ENCODE measurements at regions of chr10 and their contacts with region 1.

Region 1: DNA sequence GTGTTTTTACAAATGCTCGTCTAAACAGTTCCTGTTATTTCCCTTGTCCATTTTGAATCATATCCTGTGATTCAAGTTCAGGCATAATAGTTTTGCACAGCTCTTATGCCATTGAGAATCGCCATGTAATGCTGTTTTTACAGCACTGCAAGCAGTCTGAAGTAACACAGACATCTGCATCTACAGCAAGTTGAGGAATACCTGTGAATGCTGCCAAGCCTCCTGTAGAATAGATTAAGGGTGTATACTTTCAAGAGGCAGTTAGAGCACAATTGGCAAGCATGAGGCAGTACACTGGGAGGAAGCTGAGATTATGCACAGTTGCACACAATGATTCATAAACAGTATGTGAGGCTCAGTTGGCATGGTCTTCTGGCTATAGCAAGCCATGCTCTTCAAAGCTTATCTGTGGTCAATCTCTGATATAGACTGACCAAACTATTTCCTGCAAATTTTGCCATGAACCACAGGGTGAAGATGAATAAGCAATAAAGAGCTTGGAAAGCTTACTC is 121.9 kb upstream of the AKR1E2 start:
- DNase-seq: peak; percentile 88
- H3K4me3 Mint-ChIP-seq: peak overlapping the region; percentile 49
- H3K27ac Mint-ChIP-seq: peak overlapping the region; percentile 94
- H3K4me1 Mint-ChIP-seq: peaks cover 12% of the 10 kb centered on the region
- H3K27me3 Mint-ChIP-seq: no peaks in the 10 kb centered on the region
- CTCF ChIP-seq: no peak

Region 2: DNA sequence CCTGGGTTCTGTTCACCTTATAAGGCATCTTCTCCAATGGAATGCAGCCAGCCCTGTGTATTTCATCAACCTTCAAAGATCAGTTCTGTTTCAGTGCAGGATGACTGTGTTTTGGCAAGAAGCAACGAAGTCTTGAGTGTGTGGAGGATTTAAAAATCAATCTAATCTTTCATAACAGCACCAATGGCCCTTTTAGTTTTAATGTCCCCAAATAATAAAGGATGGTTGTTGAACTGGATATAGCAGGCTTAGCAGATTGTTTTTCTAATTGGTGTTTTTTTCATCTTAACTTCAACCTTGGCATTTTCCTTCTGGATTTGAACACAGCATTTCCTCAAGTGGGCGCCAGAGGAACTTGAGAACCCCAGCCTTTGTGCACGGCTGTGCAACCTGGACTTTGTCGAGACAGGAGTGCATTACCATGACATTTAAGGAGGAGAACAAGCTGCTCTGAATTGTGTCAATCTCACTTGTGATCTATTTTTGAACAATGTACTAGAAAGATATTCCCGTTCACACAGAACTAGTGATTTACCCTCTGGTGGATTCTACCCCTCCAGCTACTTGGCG is 191.3 kb before region 1 on chr10:
- CTCF ChIA-PET with region 1: no interaction called
- POLR2A ChIA-PET with region 1: no interaction called
- intact Hi-C with region 1: loop called (anchors 1 kb)
- DNase-seq: peak; percentile 78
- H3K4me3 Mint-ChIP-seq: no peak overlapping the region
- H3K27ac Mint-ChIP-seq: peak overlapping the region; percentile 76
- H3K4me1 Mint-ChIP-seq: peaks cover 9% of the 10 kb centered on the region
- H3K27me3 Mint-ChIP-seq: no peaks in the 10 kb centered on the region
- CTCF ChIP-seq: peak; percentile 52

Region 3: DNA sequence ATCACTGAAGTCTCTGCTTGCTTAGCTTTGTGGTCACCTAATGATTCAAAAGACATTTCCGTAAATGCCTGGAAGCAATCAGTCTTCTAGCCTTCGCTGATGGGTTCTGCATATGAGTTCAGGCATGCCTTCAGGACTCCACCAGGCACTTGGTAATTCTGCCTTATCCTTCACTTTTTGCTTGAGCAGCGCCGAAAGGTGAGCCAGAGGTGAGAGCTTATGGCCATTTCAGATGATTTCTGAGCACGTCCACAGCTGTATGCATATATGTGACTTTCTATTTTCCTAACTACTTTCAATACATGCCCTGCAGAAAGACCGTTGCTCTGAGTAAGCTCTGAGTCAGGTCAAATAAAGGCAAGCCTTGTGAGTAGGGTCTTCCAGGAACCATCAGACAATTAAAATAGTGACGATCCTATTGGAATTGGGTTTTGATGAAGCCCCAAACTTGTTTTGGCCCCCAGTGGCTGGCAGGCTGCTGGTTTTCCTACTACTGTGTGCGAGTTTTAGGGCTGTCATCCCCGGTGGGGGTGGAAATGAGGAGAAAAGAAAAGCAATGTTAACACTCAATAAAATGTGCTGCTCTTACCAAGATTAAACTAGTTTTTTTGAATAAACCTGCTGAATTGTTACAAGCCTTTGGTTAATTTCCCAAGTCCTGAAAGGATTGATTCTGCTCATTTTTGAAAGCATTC is 32.5 kb before region 1 on chr10:
- CTCF ChIA-PET with region 1: no interaction called
- POLR2A ChIA-PET with region 1: interaction called, 46 read pairs
- intact Hi-C with region 1: no loop called
- DNase-seq: peak; percentile 72
- H3K4me3 Mint-ChIP-seq: peak overlapping the region; percentile 56
- H3K27ac Mint-ChIP-seq: peak overlapping the region; percentile 90
- H3K4me1 Mint-ChIP-seq: peaks cover 27% of the 10 kb centered on the region
- H3K27me3 Mint-ChIP-seq: no peaks in the 10 kb centered on the region
- CTCF ChIP-seq: no peak

Region 4: DNA sequence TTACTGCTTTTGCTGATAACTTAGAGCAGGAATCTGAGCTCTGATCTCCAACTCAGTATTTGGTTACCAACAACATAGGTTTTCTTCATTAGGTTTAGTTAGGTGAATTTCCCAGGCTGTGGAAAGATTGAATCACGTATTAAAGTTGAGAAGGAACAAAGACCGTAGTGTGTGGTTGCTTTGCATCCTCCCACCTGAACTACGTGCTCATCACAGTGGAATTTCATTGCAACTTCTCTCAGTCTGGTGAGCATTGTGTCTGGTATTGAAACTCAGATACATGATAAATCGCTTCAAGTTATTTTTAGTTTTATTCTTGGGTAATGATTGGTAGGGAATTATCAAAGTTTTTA is 17.5 kb before region 1 on chr10:
- CTCF ChIA-PET with region 1: interaction called, 3 read pairs
- POLR2A ChIA-PET with region 1: interaction called, 16 read pairs
- intact Hi-C with region 1: no loop called
- DNase-seq: peak; percentile 64
- H3K4me3 Mint-ChIP-seq: no peak overlapping the region
- H3K27ac Mint-ChIP-seq: peak overlapping the region; percentile 77
- H3K4me1 Mint-ChIP-seq: peaks cover 51% of the 10 kb centered on the region
- H3K27me3 Mint-ChIP-seq: no peaks in the 10 kb centered on the region
- CTCF ChIP-seq: no peak

Region 5: DNA sequence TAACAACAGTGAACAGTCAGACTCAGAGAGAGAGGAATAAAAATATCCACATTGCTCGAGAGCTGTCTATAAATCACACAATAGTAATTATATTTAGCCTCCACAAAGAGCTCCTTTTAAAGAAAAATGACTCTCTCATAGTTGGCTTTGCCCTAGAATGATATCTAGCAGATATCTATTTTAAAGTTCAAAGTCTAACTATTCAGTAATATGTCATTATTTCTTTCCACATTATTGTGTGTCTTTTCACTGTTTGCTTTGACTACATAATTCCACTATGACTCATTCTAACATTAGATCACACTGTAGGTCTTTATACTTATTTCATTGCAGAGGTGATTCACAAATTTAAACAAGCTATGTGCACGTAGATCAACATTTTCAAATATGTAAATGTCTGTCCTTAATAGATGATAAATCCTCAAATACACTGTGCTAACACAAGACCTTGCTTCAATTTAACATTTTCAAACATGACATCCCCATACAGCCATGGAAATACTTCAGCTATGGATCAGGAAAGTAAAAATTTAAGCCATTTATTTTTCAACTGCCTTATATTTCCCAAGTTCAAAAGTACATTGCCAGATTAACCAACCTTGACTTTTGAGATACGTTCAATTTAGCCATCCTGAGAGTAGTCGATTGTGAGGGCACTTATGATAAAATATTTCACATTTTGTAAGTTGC is 22.0 kb after region 1 on chr10:
- CTCF ChIA-PET with region 1: interaction called, 3 read pairs
- POLR2A ChIA-PET with region 1: interaction called, 15 read pairs
- intact Hi-C with region 1: no loop called
- DNase-seq: peak; percentile 65
- H3K4me3 Mint-ChIP-seq: no peak overlapping the region
- H3K27ac Mint-ChIP-seq: peak overlapping the region; percentile 91
- H3K4me1 Mint-ChIP-seq: peaks cover 12% of the 10 kb centered on the region
- H3K27me3 Mint-ChIP-seq: no peaks in the 10 kb centered on the region
- CTCF ChIP-seq: no peak